ENCODE measurements at regions of chr13 and their contacts with region 1.

Region 1: GRCh38 chr13:44577236-44578066 is 1.3 kb upstream of the TSC22D1 start:
- DNase-seq: peak; percentile 97
- H3K4me3 Mint-ChIP-seq: peak overlapping the region; percentile 93
- H3K27ac Mint-ChIP-seq: peak overlapping the region; percentile 94
- H3K4me1 Mint-ChIP-seq: peaks cover 27% of the 10 kb centered on the region
- H3K27me3 Mint-ChIP-seq: peaks cover 47% of the 10 kb centered on the region

Region 2: DNA sequence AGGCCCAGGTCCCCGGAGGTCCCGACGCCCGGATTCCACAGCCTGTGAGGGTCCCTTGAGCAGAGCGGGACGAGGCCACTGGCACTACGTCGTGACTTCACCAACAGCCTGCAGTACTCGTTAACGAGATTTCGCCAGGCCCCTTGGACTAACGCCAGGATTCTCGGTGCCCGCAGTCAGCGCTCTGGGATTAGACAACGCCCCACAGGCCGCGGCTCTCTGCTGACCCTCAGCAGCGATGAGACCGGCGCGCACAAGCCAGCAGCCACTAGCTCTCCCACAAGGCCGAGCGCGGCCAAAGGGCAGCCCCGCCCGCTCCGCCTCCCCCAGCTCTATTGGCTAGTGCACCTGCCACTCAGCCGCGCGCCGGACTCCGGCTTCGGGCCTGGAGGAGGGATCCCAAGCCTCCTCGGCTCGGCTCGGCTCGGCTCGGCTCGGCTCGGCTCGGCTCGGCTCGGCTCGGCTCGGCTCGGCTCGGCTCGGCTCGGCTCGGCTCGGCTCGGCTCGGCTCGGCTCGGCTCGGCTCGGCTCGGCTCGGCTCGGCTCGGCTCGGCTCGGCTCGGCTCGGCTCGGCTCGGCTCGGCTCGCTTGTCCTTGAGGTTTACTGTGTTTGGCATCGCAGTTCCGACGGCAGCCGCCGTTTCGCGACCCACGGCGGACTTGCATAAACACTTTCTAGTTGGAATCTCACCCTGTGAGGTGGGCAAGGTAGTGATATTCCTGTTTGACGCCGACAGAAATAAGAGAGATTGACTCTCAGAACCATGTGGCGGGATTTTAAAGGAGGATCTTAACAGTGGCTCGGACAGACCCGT is 435.5 kb before region 1 on chr13:
- intact Hi-C with region 1: loop called (anchors 5 kb)
- DNase-seq: peak; percentile 99
- H3K4me3 Mint-ChIP-seq: peak overlapping the region; percentile 87
- H3K27ac Mint-ChIP-seq: peak overlapping the region; percentile 83
- H3K4me1 Mint-ChIP-seq: peaks cover 16% of the 10 kb centered on the region
- H3K27me3 Mint-ChIP-seq: peaks cover 30% of the 10 kb centered on the region

Region 3: GRCh38 chr13:44259045-44260027 is 318.1 kb before region 1 on chr13:
- intact Hi-C with region 1: loop called (anchors 5 kb)
- DNase-seq: peak; percentile 87
- H3K4me3 Mint-ChIP-seq: peak overlapping the region; percentile 68
- H3K27ac Mint-ChIP-seq: peak overlapping the region; percentile 79
- H3K4me1 Mint-ChIP-seq: peaks cover 17% of the 10 kb centered on the region
- H3K27me3 Mint-ChIP-seq: peaks cover 11% of the 10 kb centered on the region

Region 4: DNA sequence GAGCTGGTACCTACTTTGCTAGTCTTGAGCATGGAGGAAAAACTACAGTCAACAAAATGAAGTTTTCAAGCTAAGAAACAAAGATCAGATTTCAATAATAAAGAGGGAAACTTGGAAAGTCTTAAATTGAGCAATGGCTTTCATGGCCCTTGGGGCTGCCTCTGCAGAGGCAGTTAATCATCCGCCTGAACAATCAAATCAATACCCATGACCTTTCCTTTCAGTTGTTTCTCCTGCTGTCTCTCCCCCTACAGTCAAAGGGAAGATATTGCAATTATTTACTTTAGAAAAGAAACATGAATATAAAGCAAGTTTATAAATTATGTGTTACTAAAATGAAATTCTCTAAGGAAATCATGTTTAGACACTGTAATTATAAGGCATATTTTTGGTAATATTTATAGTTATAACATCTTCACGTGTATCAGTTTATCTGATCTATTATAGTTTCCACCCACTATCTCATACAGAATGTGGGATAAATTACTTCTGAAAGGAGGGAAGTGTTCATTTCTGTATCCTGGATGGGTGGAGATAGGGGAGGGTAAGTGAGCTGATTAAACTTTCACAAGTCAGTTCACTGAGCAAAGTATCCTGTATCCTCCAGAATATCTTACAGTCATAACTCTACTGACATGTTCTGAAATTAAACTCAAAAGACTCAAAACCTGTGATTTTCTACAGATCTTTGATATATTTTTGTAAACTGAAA is 71.1 kb after region 1 on chr13:
- intact Hi-C with region 1: loop called (anchors 1 kb)
- DNase-seq: no peak
- H3K4me3 Mint-ChIP-seq: no peak overlapping the region
- H3K27ac Mint-ChIP-seq: peak overlapping the region; percentile 29
- H3K4me1 Mint-ChIP-seq: peaks cover 14% of the 10 kb centered on the region
- H3K27me3 Mint-ChIP-seq: peaks cover 6% of the 10 kb centered on the region

Region 5: DNA sequence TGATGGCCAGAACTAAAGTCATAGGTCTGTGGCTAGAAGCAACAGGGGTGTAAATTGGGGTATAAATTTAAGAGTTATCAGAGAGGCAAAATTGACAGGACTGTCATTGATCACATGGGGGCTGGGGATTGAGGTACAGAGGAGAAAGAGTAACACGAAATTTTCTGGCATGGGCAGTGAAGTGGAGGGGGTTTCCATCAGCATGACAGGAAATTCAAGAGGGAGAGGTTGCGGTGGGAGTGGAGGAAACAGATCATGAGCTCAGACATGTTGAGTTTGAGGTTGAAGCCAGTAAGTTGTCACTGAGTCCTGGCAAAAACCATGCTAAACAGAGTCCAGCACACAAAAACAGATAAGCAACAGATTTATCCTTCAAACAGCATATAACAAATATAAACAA is 190.8 kb after region 1 on chr13:
- intact Hi-C with region 1: loop called (anchors 2 kb)
- DNase-seq: peak; percentile 88
- H3K4me3 Mint-ChIP-seq: peak overlapping the region; percentile 54
- H3K27ac Mint-ChIP-seq: peak overlapping the region; percentile 79
- H3K4me1 Mint-ChIP-seq: peaks cover 35% of the 10 kb centered on the region
- H3K27me3 Mint-ChIP-seq: no peaks in the 10 kb centered on the region

Region 6: GRCh38 chr13:44917589-44918325 is 340.3 kb after region 1 on chr13:
- intact Hi-C with region 1: loop called (anchors 1 kb)
- DNase-seq: peak; percentile 99
- H3K4me3 Mint-ChIP-seq: no peak overlapping the region
- H3K27ac Mint-ChIP-seq: no peak overlapping the region
- H3K4me1 Mint-ChIP-seq: no peaks in the 10 kb centered on the region
- H3K27me3 Mint-ChIP-seq: no peaks in the 10 kb centered on the region

Region 7: GRCh38 chr13:45340926-45341750 is 763.7 kb after region 1 on chr13 and contains the start of gene TPT1:
- intact Hi-C with region 1: loop called (anchors 1 kb)
- DNase-seq: peak; percentile 100
- H3K4me3 Mint-ChIP-seq: peak within 1 kb of the TSS; percentile 99
- H3K27ac Mint-ChIP-seq: peak within 1 kb of the TSS; percentile 99
- H3K4me1 Mint-ChIP-seq: peaks cover 45% of the 10 kb centered on the region
- H3K27me3 Mint-ChIP-seq: no peaks in the 10 kb centered on the region
- total RNA-seq, gene TPT1: 2,188 and 2,224 TPM in 2 replicates